OCI-LY7 (cell line): ENCODE measurements at regions of chrX and their contacts with region 1.

Region 1: GRCh38 chrX:19805046-19805690 is 82.2 kb downstream of the SH3KBP1 start:
- DNase-seq: peak; percentile 50
- H3K4me3 ChIP-seq: peak overlapping the region; percentile 46
- H3K27ac ChIP-seq: peak overlapping the region; percentile 73
- H3K4me1 ChIP-seq: peaks cover 91% of the 10 kb centered on the region
- CTCF ChIP-seq: no peak

Region 2: GRCh38 chrX:19747652-19748610 is 57.2 kb before region 1 on chrX:
- CTCF ChIA-PET with region 1: interaction called, 3 read pairs
- POLR2A ChIA-PET with region 1: interaction called, 16 read pairs
- intact Hi-C with region 1: no loop called
- DNase-seq: peak; percentile 83
- H3K4me3 ChIP-seq: peak overlapping the region; percentile 53
- H3K27ac ChIP-seq: peak overlapping the region; percentile 97
- H3K4me1 ChIP-seq: peaks cover 98% of the 10 kb centered on the region
- CTCF ChIP-seq: no peak

Region 3: GRCh38 chrX:19753368-19753767 is 51.8 kb before region 1 on chrX:
- CTCF ChIA-PET with region 1: no interaction called
- POLR2A ChIA-PET with region 1: interaction called, 16 read pairs
- intact Hi-C with region 1: no loop called
- DNase-seq: no peak
- H3K4me3 ChIP-seq: peak overlapping the region; percentile 47
- H3K27ac ChIP-seq: peak overlapping the region; percentile 97
- H3K4me1 ChIP-seq: peaks cover 98% of the 10 kb centered on the region
- CTCF ChIP-seq: no peak

Region 4: GRCh38 chrX:19772826-19773628 is 32.1 kb before region 1 on chrX:
- CTCF ChIA-PET with region 1: no interaction called
- POLR2A ChIA-PET with region 1: interaction called, 13 read pairs
- intact Hi-C with region 1: loop called (anchors 5 kb)
- DNase-seq: peak; percentile 52
- H3K4me3 ChIP-seq: peak overlapping the region; percentile 62
- H3K27ac ChIP-seq: peak overlapping the region; percentile 100
- H3K4me1 ChIP-seq: peaks cover 89% of the 10 kb centered on the region
- CTCF ChIP-seq: no peak

Region 5: DNA sequence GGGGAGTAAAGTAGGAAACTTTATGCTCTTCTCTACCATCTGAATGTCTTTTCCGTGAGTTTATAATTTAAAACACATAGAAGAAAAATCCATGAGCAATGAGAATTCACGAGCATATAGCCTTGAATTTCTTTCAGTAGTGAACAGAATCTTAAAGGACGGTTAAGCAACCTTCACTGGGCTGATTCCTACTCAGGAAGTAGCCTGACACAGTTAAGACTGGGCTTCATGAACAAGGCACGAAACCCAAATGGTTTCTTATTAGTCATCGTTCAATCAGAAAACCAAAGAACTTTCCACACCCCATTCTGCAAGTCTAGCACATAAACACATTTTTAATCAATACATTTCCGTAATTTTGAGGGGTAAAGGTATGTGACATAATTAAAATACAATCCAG is 13.6 kb before region 1 on chrX:
- CTCF ChIA-PET with region 1: no interaction called
- POLR2A ChIA-PET with region 1: interaction called, 20 read pairs
- intact Hi-C with region 1: no loop called
- DNase-seq: no peak
- H3K4me3 ChIP-seq: no peak overlapping the region
- H3K27ac ChIP-seq: peak overlapping the region; percentile 57
- H3K4me1 ChIP-seq: peaks cover 58% of the 10 kb centered on the region
- CTCF ChIP-seq: no peak

Region 6: GRCh38 chrX:19840899-19841648 is 35.9 kb after region 1 on chrX:
- CTCF ChIA-PET with region 1: no interaction called
- POLR2A ChIA-PET with region 1: interaction called, 5 read pairs
- intact Hi-C with region 1: loop called (anchors 2 kb)
- DNase-seq: peak; percentile 55
- H3K4me3 ChIP-seq: peak overlapping the region; percentile 46
- H3K27ac ChIP-seq: peak overlapping the region; percentile 81
- H3K4me1 ChIP-seq: peaks cover 51% of the 10 kb centered on the region
- CTCF ChIP-seq: no peak

Region 7: GRCh38 chrX:19849464-19850080 is 44.4 kb after region 1 on chrX:
- CTCF ChIA-PET with region 1: no interaction called
- POLR2A ChIA-PET with region 1: interaction called, 10 read pairs
- intact Hi-C with region 1: no loop called
- DNase-seq: peak; percentile 51
- H3K4me3 ChIP-seq: peak overlapping the region; percentile 48
- H3K27ac ChIP-seq: peak overlapping the region; percentile 50
- H3K4me1 ChIP-seq: peaks cover 51% of the 10 kb centered on the region
- CTCF ChIP-seq: no peak

Region 8: GRCh38 chrX:20101934-20102581 is 296.9 kb after region 1 on chrX:
- CTCF ChIA-PET with region 1: no interaction called
- POLR2A ChIA-PET with region 1: no interaction called
- intact Hi-C with region 1: no loop called
- DNase-seq: no peak
- H3K4me3 ChIP-seq: no peak overlapping the region
- H3K27ac ChIP-seq: no peak overlapping the region
- H3K4me1 ChIP-seq: no peaks in the 10 kb centered on the region
- CTCF ChIP-seq: no peak